Activated CD4-positive, alpha-beta memory T cell treated with anti-CD3 and anti-CD28 coated beads, Interleukin-2, amount 10 ng/mL, durations not matched to agents 7 days and 5 days (primary cell): ENCODE measurements at regions of chr1 and their contacts with region 1.

Region 1: GRCh38 chr1:197356723-197357533 is 88.9 kb downstream of the CRB1 start:
- DNase-seq: peak; percentile 24
- H3K4me3 Mint-ChIP-seq: no peak overlapping the region
- H3K27ac Mint-ChIP-seq: no peak overlapping the region
- H3K4me1 Mint-ChIP-seq: no peaks in the 10 kb centered on the region
- H3K27me3 Mint-ChIP-seq: no peaks in the 10 kb centered on the region

Region 2: DNA sequence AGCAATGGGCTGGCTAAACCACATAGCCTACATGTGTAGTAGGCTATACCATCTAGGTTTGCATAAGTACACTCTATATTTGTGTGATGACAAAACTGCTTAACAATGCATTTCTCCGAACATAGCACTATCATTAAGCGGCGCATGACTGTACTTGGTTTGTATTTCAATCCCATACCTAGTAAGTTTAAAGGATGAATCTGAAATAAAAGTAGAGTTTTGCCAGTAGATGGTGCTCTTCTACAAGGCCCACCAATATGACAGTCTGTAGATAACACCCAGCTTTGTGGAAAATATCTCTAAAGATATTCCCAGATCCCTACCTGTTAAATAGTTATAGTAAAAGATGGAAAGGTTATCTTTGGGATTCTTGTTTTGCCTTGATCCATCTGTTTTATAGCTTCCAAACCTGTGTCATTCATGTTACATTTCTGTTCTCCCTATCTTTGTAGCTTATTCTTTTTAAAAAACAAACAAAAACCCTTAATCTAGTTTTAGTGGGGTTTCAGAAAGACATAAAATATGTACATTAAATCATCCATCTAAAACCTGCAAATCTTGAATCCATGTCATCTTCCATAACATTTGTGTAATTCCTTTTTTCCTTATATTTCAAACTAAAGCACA is 176.6 kb before region 1 on chr1:
- CTCF ChIA-PET with region 1: interaction called, 39 read pairs
- POLR2A ChIA-PET with region 1: no interaction called
- DNase-seq: no peak
- H3K4me3 Mint-ChIP-seq: no peak overlapping the region
- H3K27ac Mint-ChIP-seq: no peak overlapping the region
- H3K4me1 Mint-ChIP-seq: peaks cover under 1% of the 10 kb centered on the region
- H3K27me3 Mint-ChIP-seq: no peaks in the 10 kb centered on the region

Region 3: GRCh38 chr1:197285526-197286205 is 71.3 kb before region 1 on chr1:
- CTCF ChIA-PET with region 1: no interaction called
- POLR2A ChIA-PET with region 1: no interaction called
- DNase-seq: no peak
- H3K4me3 Mint-ChIP-seq: no peak overlapping the region
- H3K27ac Mint-ChIP-seq: no peak overlapping the region
- H3K4me1 Mint-ChIP-seq: no peaks in the 10 kb centered on the region
- H3K27me3 Mint-ChIP-seq: peaks cover 9% of the 10 kb centered on the region

Region 4: GRCh38 chr1:197327776-197328364 is 29.1 kb before region 1 on chr1:
- CTCF ChIA-PET with region 1: interaction called, 14 read pairs
- POLR2A ChIA-PET with region 1: no interaction called
- DNase-seq: no peak
- H3K4me3 Mint-ChIP-seq: no peak overlapping the region
- H3K27ac Mint-ChIP-seq: no peak overlapping the region
- H3K4me1 Mint-ChIP-seq: no peaks in the 10 kb centered on the region
- H3K27me3 Mint-ChIP-seq: peaks cover 3% of the 10 kb centered on the region

Region 5: DNA sequence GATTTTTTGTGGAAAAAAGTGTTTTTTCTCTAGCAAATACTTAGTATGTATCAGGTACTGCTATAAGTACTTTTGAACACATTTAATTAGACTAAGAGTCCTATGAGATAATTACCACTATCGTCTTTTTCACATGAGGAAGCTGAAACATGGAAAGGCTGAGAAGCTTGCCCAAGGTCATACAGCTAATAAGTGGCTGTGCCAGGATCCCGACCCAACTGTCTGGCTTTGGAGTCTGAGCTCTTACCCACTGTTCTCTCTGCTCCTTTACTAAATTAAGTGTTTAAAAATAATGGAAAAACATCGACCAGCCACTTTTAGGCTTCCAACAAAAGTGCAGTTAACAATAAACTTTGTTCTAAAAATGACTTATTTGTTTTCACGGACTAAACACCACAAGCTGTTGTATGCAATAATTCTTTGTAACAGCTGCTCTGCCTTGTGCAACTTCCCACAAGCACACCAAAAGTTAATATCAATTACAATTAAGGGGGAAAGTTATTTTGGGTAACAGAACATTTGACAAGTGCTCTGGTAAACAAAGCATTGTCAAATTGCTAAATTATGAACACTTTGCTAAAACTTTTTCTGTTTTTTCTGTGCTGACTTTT is 13.2 kb before region 1 on chr1:
- CTCF ChIA-PET with region 1: interaction called, 11 read pairs
- POLR2A ChIA-PET with region 1: no interaction called
- DNase-seq: no peak
- H3K4me3 Mint-ChIP-seq: no peak overlapping the region
- H3K27ac Mint-ChIP-seq: no peak overlapping the region
- H3K4me1 Mint-ChIP-seq: peaks cover 10% of the 10 kb centered on the region
- H3K27me3 Mint-ChIP-seq: peaks cover 10% of the 10 kb centered on the region